Activated CD4-positive, alpha-beta T cell treated with anti-CD3 and anti-CD28 coated beads, Interleukin-2, amount 10 ng/mL, durations not matched to agents 24 days and 14 days (primary cell): ENCODE measurements at regions of chr7 and their contacts with region 1.

Region 1: DNA sequence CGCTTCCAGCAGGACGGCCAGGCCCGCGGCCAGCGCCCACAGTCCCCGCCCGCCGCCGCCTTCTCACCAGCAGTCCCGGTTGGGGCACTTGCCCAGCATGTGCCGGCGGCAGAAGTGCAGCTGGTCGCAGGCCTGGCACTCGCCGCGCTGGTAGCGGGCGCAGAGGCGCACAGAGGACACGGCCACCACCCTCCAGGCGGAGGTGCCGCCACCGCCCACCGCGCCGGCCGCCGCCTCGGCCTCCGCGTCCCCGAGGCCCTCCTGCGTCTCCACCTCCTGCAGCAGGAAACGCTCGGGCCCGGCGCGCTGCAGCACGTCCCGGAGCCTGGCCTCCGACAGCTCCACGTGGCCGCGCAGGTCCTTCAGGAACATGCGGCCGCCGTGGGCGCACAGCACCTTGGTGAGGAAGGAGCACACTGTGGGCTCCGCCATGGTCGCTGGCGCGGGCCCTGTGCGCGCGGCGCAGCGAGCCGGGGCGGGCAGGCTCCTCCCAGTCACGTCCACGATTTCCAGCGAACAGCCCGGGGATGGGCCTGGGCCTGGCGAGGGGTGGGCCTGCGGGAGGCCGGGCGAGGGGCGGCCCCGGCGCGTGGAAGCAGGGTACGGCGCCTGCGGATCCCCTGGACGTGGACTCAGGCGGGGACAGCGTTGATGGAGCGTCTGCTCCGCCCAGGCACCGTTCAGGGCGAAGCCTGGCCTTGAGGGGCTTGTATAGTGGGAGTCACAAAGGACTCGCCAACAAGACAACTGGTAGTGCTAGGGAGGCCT is at the start of gene ZC3HAV1L:
- DNase-seq: peak; percentile 90
- H3K4me3 Mint-ChIP-seq: peak within 1 kb of the TSS; percentile 89
- H3K27ac Mint-ChIP-seq: peak within 1 kb of the TSS; percentile 90
- H3K4me1 Mint-ChIP-seq: peaks cover 39% of the 10 kb centered on the region
- H3K27me3 Mint-ChIP-seq: peaks cover 3% of the 10 kb centered on the region
- total RNA-seq, gene ZC3HAV1L: 36.5 and 38.5 TPM in 2 replicates

Region 2: DNA sequence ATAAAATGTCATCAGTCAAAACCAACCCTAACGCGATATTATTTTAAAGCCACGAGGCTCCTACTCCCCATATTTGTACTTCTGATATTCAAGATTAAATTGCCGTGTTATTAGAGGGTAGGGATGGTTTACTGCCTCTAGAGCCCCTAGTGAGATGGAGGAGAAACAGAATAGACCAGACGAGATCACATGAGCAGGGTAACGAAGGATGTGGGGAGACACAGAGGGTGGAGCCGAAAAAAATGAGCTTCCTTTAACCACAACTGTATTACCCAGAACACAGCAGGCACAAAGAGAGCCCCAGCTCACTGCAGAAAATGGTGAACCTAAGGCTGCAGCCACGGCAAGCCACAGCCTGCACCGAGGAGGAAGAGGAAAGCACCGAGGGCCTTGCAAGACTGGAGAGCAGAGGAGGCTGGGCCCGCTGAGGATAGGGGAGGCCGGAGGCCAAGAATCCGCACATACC is 59.5 kb after region 1 on chr7:
- intact Hi-C with region 1: loop called (anchors 5 kb)
- DNase-seq: peak; percentile 96
- H3K4me3 Mint-ChIP-seq: peak overlapping the region; percentile 82
- H3K27ac Mint-ChIP-seq: peak overlapping the region; percentile 88
- H3K4me1 Mint-ChIP-seq: peaks cover 76% of the 10 kb centered on the region
- H3K27me3 Mint-ChIP-seq: no peaks in the 10 kb centered on the region

Region 3: DNA sequence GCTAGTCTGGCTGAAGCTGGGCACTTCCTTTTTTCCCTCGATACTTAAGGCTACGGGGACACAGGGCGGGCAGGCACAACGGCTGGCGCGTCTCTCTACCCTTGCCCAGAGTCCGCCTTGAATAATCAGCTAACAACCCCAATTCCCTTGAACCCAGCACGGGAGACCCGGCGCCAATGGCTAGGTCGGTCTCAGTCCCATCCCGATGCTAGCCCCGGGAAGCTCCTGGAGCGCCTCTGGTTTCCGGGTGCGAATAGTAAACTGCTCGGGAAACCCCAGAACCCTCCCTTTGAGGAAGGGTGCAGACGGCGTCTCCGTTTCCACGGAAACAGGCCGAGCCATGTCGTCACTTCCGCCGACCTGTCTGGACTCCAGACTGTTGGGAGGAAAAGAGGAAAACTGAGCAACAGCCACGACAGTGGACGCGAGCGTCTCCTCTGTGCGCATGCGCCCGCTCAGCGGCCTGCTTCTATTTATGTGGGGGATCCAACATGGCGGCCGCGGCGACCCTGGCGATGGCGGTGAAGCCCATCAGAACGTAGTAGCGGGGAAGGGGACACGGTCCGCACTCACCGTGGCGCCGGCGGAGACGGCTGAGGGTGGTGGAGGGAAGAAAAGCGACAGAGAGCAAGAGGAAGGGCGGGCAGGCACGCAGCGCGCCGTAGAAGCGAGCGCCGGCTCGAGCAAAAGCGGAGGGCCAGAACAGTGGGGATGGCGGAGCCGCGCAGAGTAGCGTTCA is 195.2 kb after region 1 on chr7 and contains the start of gene UBN2:
- intact Hi-C with region 1: loop called (anchors 5 kb)
- DNase-seq: peak; percentile 97
- H3K4me3 Mint-ChIP-seq: peak within 1 kb of the TSS; percentile 98
- H3K27ac Mint-ChIP-seq: peak within 1 kb of the TSS; percentile 97
- H3K4me1 Mint-ChIP-seq: peaks cover 20% of the 10 kb centered on the region
- H3K27me3 Mint-ChIP-seq: peaks cover 21% of the 10 kb centered on the region
- total RNA-seq, gene UBN2: 12.5 and 15.2 TPM in 2 replicates